ENCODE measurements at regions of chr22 and their contacts with region 1.

Region 1: GRCh38 chr22:30005213-30005857 is 74.9 kb upstream of the HORMAD2 start:
- DNase-seq: peak; percentile 15 to 69 (median 53)
- ATAC-seq: peak; percentile 76
- H3K4me3 ChIP-seq: no peak overlapping the region
- H3K4me3 Mint-ChIP-seq: no peak overlapping the region
- H3K27ac ChIP-seq: no peak overlapping the region
- H3K27ac Mint-ChIP-seq: peak overlapping the region in 4 of 9 donors; percentile 37 to 77 (median 48)
- H3K4me1 ChIP-seq: no peaks in the 10 kb centered on the region
- H3K4me1 Mint-ChIP-seq: peaks cover 0 to 18% (median 7%) of the 10 kb centered on the region in 7 donors
- H3K27me3 ChIP-seq: no peaks in the 10 kb centered on the region
- H3K27me3 Mint-ChIP-seq: no peaks in the 10 kb centered on the region

Region 2: GRCh38 chr22:29300807-29301601 is 704.3 kb before region 1 on chr22:
- CTCF ChIA-PET with region 1: no interaction called
- POLR2A ChIA-PET with region 1: no interaction called
- intact Hi-C with region 1: no loop called
- DNase-seq: no peak
- ATAC-seq: peak; percentile 12
- H3K4me3 ChIP-seq: no peak overlapping the region
- H3K4me3 Mint-ChIP-seq: no peak overlapping the region
- H3K27ac ChIP-seq: no peak overlapping the region
- H3K27ac Mint-ChIP-seq: peak overlapping the region in 6 of 9 donors; percentile 22 to 69 (median 32)
- H3K4me1 ChIP-seq: peaks cover 0 to 3% of the 10 kb centered on the region in 2 donors
- H3K4me1 Mint-ChIP-seq: peaks cover 2 to 17% (median 6%) of the 10 kb centered on the region in 7 donors
- H3K27me3 ChIP-seq: peaks cover 0 to 7% of the 10 kb centered on the region in 2 donors
- H3K27me3 Mint-ChIP-seq: peaks cover 0 to 14% (median 9%) of the 10 kb centered on the region in 5 donors

Region 3: GRCh38 chr22:29394931-29395581 is 610.3 kb before region 1 on chr22:
- CTCF ChIA-PET with region 1: no interaction called
- POLR2A ChIA-PET with region 1: no interaction called
- intact Hi-C with region 1: loop called in 1 of 2 experiments (anchors 1 kb)
- DNase-seq: peak; percentile 43 to 70 (median 64)
- ATAC-seq: peak; percentile 98
- H3K4me3 ChIP-seq: no peak overlapping the region
- H3K4me3 Mint-ChIP-seq: peak overlapping the region in 1 of 10 donors; percentile 23
- H3K27ac ChIP-seq: no peak overlapping the region
- H3K27ac Mint-ChIP-seq: peak overlapping the region in 2 of 9 donors; percentile 38 to 52
- H3K4me1 ChIP-seq: no peaks in the 10 kb centered on the region
- H3K4me1 Mint-ChIP-seq: peaks cover 7 to 19% (median 8%) of the 10 kb centered on the region in 7 donors
- H3K27me3 ChIP-seq: no peaks in the 10 kb centered on the region
- H3K27me3 Mint-ChIP-seq: no peaks in the 10 kb centered on the region

Region 4: DNA sequence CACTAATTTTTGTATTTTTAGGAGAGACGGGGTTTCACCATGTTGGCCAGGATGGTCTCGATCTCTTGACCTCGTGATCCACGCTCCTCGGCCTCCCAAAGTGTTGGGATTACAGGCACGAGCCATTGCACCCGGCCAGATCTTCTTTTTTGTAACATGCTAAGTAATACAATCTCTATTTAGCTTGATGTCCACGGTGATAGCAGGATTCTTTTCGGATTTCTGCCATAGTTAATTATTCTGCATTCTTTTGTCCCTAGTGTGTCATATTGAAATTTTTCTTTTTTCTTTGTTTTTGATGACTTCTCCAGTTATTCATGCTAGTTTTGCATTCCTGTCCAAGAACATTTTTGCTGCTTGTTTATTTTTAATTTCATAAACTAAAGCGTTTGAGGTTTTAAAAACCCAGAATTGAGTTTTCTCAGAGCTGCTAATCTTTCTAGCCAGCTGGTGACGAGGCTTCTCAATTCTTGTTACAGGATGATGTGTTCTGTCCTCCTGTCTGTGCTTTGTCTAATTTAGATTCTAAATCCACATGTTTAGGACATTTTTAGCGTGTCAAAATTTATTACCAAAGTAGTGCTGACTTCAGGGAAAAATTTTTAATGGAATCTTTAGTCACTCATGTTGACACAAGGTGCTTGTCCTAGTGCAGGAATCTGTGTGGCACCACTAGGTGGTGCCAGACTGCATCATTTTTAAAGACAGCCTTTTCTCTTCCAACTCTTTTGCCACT is 380.1 kb before region 1 on chr22:
- CTCF ChIA-PET with region 1: interaction called, 3 read pairs
- POLR2A ChIA-PET with region 1: no interaction called
- intact Hi-C with region 1: loop called in 1 of 2 experiments (anchors 1 kb)
- DNase-seq: peak in 7 of 9 donors; percentile 15 to 49 (median 40)
- ATAC-seq: peak; percentile 74
- H3K4me3 ChIP-seq: no peak overlapping the region
- H3K4me3 Mint-ChIP-seq: peak overlapping the region in 7 of 10 donors; percentile 2 to 64 (median 25)
- H3K27ac ChIP-seq: peak overlapping the region; percentile 73
- H3K27ac Mint-ChIP-seq: peak overlapping the region; percentile 63 to 89 (median 85)
- H3K4me1 ChIP-seq: peaks cover 0 to 39% of the 10 kb centered on the region in 2 donors
- H3K4me1 Mint-ChIP-seq: peaks cover 41 to 92% (median 85%) of the 10 kb centered on the region in 7 donors
- H3K27me3 ChIP-seq: no peaks in the 10 kb centered on the region
- H3K27me3 Mint-ChIP-seq: no peaks in the 10 kb centered on the region

Region 5: DNA sequence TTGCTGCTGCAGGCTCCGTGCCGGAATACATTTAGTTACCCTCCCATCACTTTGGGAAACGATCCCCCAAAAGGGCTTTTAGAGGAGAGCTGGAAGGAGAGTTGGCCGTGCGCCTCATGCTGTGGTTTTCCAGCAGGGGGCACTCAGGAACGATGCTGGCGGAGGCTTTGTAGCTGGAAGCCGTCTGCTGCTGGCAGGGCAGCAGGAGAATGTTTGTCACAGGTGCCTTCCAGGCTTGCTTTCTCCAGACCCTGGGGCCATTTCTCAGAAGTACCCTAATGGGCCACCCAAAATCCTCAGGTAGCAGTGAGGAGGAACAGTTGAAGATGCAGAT is 315.5 kb before region 1 on chr22:
- CTCF ChIA-PET with region 1: interaction called, 3 read pairs
- POLR2A ChIA-PET with region 1: no interaction called
- intact Hi-C with region 1: loop called (anchors 1 kb)
- DNase-seq: peak in 6 of 9 donors; percentile 25 to 33 (median 28)
- ATAC-seq: peak; percentile 48
- H3K4me3 ChIP-seq: no peak overlapping the region
- H3K4me3 Mint-ChIP-seq: no peak overlapping the region
- H3K27ac ChIP-seq: no peak overlapping the region
- H3K27ac Mint-ChIP-seq: peak overlapping the region in 6 of 9 donors; percentile 1 to 54 (median 6)
- H3K4me1 ChIP-seq: peaks cover 0 to 5% of the 10 kb centered on the region in 2 donors
- H3K4me1 Mint-ChIP-seq: peaks cover 0 to 38% (median 7%) of the 10 kb centered on the region in 7 donors
- H3K27me3 ChIP-seq: no peaks in the 10 kb centered on the region
- H3K27me3 Mint-ChIP-seq: no peaks in the 10 kb centered on the region

Region 6: DNA sequence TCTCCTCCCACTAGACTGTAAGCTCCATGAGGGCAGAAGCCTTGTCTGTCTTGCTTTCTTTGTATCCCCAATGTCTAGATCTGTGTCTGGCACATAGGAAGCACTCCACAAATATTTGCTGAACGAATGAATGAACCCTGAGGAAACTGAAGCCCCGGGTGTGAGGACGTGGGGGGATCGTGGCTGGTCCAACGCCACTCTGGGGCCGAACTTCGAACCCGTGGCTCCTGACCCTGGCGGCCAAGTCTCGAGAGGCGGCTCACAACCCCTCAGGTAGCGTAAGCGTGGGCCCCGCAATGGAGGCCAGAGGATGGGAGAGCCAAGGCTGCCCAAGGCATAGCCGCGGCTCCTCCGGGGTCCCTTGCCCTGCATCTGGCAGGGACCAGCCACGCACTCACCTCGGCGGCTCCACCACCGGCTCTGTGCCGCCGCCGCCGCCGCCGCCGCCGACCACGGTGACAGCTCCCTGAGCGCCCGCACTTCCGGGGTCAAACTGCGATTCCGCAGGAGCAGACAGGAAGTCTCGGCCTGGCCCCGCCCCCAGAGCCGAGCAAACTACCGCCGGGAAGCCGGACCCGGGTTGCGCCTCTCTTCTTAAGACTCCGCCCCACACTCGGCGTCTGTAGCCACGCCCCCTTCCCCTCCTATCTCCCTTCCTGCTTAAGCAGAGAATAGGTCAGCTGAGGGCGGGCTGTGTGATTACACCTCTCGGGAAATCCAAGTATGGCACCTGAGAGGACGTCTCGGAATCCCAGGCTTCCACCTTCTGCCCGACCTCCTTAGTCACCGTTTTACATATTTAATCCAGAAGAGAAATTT is 167.3 kb before region 1 on chr22 and contains the start of gene ASCC2:
- CTCF ChIA-PET with region 1: interaction called, 3 read pairs
- POLR2A ChIA-PET with region 1: no interaction called
- intact Hi-C with region 1: loop called in 1 of 2 experiments (anchors 1 kb)
- DNase-seq: peak; percentile 93 to 98 (median 97)
- ATAC-seq: peak; percentile 100
- H3K4me3 ChIP-seq: peak within 1 kb of the TSS; percentile 98
- H3K4me3 Mint-ChIP-seq: peak within 1 kb of the TSS; percentile 89 to 99 (median 95)
- H3K27ac ChIP-seq: peak within 1 kb of the TSS; percentile 79
- H3K27ac Mint-ChIP-seq: peak within 1 kb of the TSS; percentile 94 to 99 (median 95)
- H3K4me1 ChIP-seq: peaks cover 12 to 22% of the 10 kb centered on the region in 2 donors
- H3K4me1 Mint-ChIP-seq: peaks cover 31 to 55% (median 45%) of the 10 kb centered on the region in 7 donors
- H3K27me3 ChIP-seq: no peaks in the 10 kb centered on the region
- H3K27me3 Mint-ChIP-seq: no peaks in the 10 kb centered on the region
- total RNA-seq, gene ASCC2: 90.2 to 101 (median 93.8) TPM

Region 7: GRCh38 chr22:30089655-30089974 is 84.3 kb after region 1 on chr22:
- CTCF ChIA-PET with region 1: no interaction called
- POLR2A ChIA-PET with region 1: no interaction called
- intact Hi-C with region 1: loop called in 1 of 2 experiments (anchors 5 kb)
- DNase-seq: no peak
- ATAC-seq: no peak
- H3K4me3 ChIP-seq: no peak overlapping the region
- H3K4me3 Mint-ChIP-seq: no peak overlapping the region
- H3K27ac ChIP-seq: no peak overlapping the region
- H3K27ac Mint-ChIP-seq: no peak overlapping the region
- H3K4me1 ChIP-seq: peaks cover 4 to 8% of the 10 kb centered on the region in 2 donors
- H3K4me1 Mint-ChIP-seq: peaks cover 8 to 25% (median 11%) of the 10 kb centered on the region in 7 donors
- H3K27me3 ChIP-seq: no peaks in the 10 kb centered on the region
- H3K27me3 Mint-ChIP-seq: peaks cover 0 to 5% (median 0%) of the 10 kb centered on the region in 5 donors

Measured in naive thymus-derived CD4-positive, alpha-beta T cell (primary cell).